Colonic mucosa (tissue), 4 donors: ENCODE measurements at regions of chr6 and their contacts with region 1.

Region 1: DNA sequence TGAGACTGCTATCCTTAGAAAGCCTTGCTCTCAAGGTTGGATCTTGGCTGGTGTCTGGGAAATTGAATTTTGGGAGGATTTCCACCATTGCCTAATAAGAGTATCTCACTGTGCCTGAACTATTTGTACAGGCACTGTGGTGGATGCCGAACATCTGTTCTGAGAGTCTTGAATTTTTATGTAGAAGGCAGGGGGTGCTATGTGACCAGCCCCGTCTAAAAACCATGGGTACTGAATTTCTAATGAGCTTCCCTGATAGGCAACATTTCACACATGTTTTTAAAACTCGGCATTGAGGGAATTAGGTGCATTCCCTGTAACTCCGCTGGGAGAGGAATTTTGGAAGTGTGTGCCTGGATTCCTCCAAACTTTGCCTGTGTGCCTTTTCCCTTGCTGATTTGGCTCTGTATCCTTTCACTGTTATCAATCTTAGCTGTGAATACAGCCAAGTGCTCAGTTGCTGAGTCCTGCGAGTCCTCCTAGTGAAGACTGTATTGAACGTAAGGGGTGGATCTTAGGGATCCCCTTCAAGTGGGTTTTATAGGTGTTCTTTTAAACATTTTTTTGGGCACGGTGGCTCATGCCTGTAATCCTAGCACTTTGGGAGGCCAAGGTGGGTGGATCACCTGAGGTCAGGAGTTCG is 27.6 kb upstream of the SCAF8 start:
- DNase-seq: no peak
- H3K4me3 ChIP-seq: no peak overlapping the region
- H3K27ac ChIP-seq: no peak overlapping the region
- H3K4me1 ChIP-seq: no peaks in the 10 kb centered on the region
- H3K27me3 ChIP-seq: no peaks in the 10 kb centered on the region
- CTCF ChIP-seq: no peak

Region 2: GRCh38 chr6:154112181-154112809 is 593.3 kb before region 1 on chr6:
- intact Hi-C with region 1: no loop called
- DNase-seq: no peak
- H3K4me3 ChIP-seq: no peak overlapping the region
- H3K27ac ChIP-seq: no peak overlapping the region
- H3K4me1 ChIP-seq: no peaks in the 10 kb centered on the region
- H3K27me3 ChIP-seq: no peaks in the 10 kb centered on the region
- CTCF ChIP-seq: no peak

Region 3: DNA sequence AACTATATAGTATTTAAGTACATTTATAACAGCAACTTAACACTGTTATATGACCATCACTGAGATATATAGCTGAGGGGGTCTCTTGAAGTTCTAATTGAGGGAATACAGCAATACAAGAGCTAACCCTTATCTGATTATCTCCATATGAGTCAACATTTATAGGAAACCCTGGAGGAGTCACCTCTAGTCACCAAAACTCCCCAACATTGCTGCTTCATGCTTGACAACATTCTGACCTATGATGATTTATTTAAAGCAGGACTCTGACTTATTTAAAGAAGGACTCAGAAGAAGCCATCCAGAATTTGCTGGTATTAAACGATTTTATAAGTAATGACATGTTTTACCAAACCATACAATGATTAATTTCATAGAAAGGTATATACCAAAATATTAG is 932.6 kb after region 1 on chr6:
- intact Hi-C with region 1: loop called (anchors 10 kb)
- DNase-seq: no peak
- H3K4me3 ChIP-seq: no peak overlapping the region
- H3K27ac ChIP-seq: no peak overlapping the region
- H3K4me1 ChIP-seq: no peaks in the 10 kb centered on the region
- H3K27me3 ChIP-seq: no peaks in the 10 kb centered on the region
- CTCF ChIP-seq: no peak